Dendritic cell treated with granulocyte-macrophage colony-stimulating factor and Interleukin-4, amounts not matched to agents 40 ng/mL and 50 ng/mL, for 4 days (primary cell): ENCODE measurements at regions of chr15 and their contacts with region 1.

Region 1: DNA sequence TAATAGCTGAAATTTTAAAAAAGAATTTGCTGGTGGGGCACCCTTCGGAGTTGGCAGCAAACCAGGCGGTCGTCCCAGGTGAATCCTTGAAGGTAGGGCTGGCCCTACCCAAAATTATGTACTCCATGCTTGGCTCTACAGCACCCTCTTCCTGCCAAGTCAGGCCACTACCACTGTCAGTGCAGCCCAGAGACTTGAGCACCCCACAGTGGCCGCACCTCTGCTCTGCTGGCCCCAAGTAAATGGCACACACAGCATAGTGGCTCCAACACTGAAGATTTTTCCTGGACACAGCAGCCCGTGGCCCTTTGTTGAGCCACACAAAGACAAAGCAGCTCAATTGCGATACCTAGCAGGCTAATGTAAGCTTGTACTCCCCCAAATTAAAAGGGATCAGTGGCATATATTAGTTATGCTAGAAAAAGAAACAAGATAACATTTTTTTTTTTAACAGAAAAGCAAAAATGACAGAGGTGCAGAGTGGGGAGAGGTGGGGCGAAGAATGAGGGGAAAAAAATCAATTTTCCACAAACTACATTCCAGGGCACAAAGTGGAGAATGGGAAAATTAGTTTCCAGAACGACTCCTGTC is 250.5 kb downstream of the UACA start:
- H3K4me3 Mint-ChIP-seq: no peak overlapping the region
- H3K27ac Mint-ChIP-seq: no peak overlapping the region
- H3K4me1 Mint-ChIP-seq: peaks cover 50% of the 10 kb centered on the region
- H3K27me3 Mint-ChIP-seq: peaks cover 28% of the 10 kb centered on the region

Region 2: GRCh38 chr15:70140543-70141375 is 372.1 kb before region 1 on chr15:
- intact Hi-C with region 1: loop called (anchors 5 kb)
- H3K4me3 Mint-ChIP-seq: peak overlapping the region; percentile 48
- H3K27ac Mint-ChIP-seq: peak overlapping the region; percentile 56
- H3K4me1 Mint-ChIP-seq: peaks cover 60% of the 10 kb centered on the region
- H3K27me3 Mint-ChIP-seq: peaks cover 46% of the 10 kb centered on the region

Region 3: GRCh38 chr15:70474471-70475396 is 38.1 kb before region 1 on chr15:
- intact Hi-C with region 1: loop called (anchors 5 kb)
- H3K4me3 Mint-ChIP-seq: peak overlapping the region; percentile 50
- H3K27ac Mint-ChIP-seq: peak overlapping the region; percentile 83
- H3K4me1 Mint-ChIP-seq: peaks cover 69% of the 10 kb centered on the region
- H3K27me3 Mint-ChIP-seq: peaks cover 46% of the 10 kb centered on the region